ENCODE measurements at regions of chr18 and their contacts with region 1.

Region 1: DNA sequence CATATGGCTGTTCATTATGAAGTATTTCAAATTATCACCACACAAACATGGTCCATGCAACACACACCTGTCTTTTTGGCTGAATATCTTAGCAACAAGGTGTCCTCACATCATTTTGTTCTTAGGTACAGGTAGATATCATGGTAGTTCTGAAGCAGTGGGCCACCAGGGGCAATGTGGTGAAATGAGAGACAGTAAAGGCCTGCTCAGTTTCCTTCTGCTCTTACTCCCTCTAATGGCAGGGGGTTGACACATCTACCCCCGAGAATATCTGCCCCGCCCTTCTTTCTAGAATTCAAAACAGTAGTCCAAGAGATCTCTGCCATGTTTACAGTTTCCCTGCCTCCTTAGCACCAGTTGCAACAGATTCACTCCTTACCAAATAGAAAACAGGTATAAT is 147.0 kb upstream of the KLHL14 start:
- DNase-seq: no peak
- ATAC-seq: no peak
- H3K4me3 ChIP-seq: no peak overlapping the region
- H3K27ac ChIP-seq: no peak overlapping the region
- H3K4me1 ChIP-seq: no peaks in the 10 kb centered on the region
- H3K27me3 ChIP-seq: no peaks in the 10 kb centered on the region
- CTCF ChIP-seq: no peak
- POLR2A ChIP-seq: no peak

Region 2: GRCh38 chr18:32870611-32871010 is 49.2 kb before region 1 on chr18:
- in situ Hi-C with region 1: no loop called
- intact Hi-C with region 1: loop called (anchors 2 kb)
- DNase-seq: no peak
- ATAC-seq: no peak
- H3K4me3 ChIP-seq: no peak overlapping the region
- H3K27ac ChIP-seq: no peak overlapping the region
- H3K4me1 ChIP-seq: no peaks in the 10 kb centered on the region
- H3K27me3 ChIP-seq: peaks cover 0 to 2% (median 0%) of the 10 kb centered on the region in 3 donors
- CTCF ChIP-seq: no peak
- POLR2A ChIP-seq: no peak

Region 3: GRCh38 chr18:32974421-32975162 is 54.8 kb after region 1 on chr18:
- in situ Hi-C with region 1: no loop called
- intact Hi-C with region 1: no loop called
- DNase-seq: no peak
- ATAC-seq: no peak
- H3K4me3 ChIP-seq: no peak overlapping the region
- H3K27ac ChIP-seq: no peak overlapping the region
- H3K4me1 ChIP-seq: no peaks in the 10 kb centered on the region
- H3K27me3 ChIP-seq: no peaks in the 10 kb centered on the region
- CTCF ChIP-seq: no peak
- POLR2A ChIP-seq: no peak

Measured in gastrocnemius medialis (tissue), 4 donors.